Ascending aorta (tissue), 2 donors: ENCODE measurements at regions of chr20 and their contacts with region 1.

Region 1: DNA sequence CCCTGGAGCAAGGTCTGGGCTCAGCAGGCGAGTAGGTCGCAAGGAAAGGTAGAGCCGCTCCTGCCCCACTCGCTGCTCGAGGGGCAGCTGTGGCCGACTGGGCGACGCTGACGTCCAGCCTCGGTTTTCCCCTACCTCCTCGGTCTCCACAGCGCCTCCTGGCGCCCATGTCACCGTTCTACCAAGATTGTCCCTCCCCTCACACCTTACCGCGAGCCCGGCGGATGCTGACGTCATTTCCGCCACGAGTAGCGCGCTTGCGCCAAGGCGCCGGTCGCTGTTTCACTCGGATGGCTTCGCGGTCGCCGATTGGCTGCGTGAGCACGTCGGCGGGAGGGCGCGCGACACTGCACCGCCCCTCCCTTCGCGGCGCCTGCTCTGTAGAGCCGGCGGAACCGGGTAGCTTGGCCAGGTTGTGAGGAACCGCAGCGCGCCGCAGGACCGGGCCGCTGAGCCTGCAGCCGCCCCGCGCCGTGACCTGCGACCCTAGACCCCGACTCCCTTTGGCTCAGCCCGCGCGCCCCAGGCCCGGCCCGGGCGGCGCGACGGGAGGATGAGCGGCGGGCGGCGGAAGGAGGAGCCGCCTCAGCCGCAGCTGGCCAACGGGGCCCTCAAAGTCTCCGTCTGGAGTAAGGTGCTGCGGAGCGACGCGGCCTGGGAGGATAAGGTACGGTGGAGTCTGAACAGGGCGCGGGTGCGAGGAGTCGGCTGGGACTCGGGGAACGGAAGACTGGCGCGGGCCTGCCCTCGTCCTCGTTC is at the start of gene RAB5IF:
- DNase-seq: peak; percentile 94 to 99
- H3K4me3 ChIP-seq: peak within 1 kb of the TSS; percentile 80 to 100
- H3K27ac ChIP-seq: peak within 1 kb of the TSS; percentile 83 to 92
- H3K4me1 ChIP-seq: peaks cover 5 to 21% of the 10 kb centered on the region in 2 donors
- H3K27me3 ChIP-seq: no peaks in the 10 kb centered on the region
- CTCF ChIP-seq: peak; percentile 85 to 97 (median 88)
- total RNA-seq, gene RAB5IF: 28.4 TPM

Region 2: GRCh38 chr20:36235892-36236785 is 369.4 kb before region 1 on chr20 and contains the start of gene AAR2:
- intact Hi-C with region 1: loop called (anchors 1 kb)
- DNase-seq: peak; percentile 13 to 83
- H3K4me3 ChIP-seq: peak within 1 kb of the TSS; percentile 90 to 94
- H3K27ac ChIP-seq: peak within 1 kb of the TSS; percentile 82 to 84
- H3K4me1 ChIP-seq: peaks cover 5 to 17% of the 10 kb centered on the region in 2 donors
- H3K27me3 ChIP-seq: no peaks in the 10 kb centered on the region
- CTCF ChIP-seq: no peak
- total RNA-seq, gene AAR2: 51.4 TPM

Region 3: GRCh38 chr20:36460648-36461599 is 144.7 kb before region 1 on chr20:
- intact Hi-C with region 1: loop called (anchors 2 kb)
- DNase-seq: peak; percentile 67 to 97
- H3K4me3 ChIP-seq: peak overlapping the region; percentile 80 to 99
- H3K27ac ChIP-seq: peak overlapping the region; percentile 99
- H3K4me1 ChIP-seq: peaks cover 21 to 33% of the 10 kb centered on the region in 2 donors
- H3K27me3 ChIP-seq: no peaks in the 10 kb centered on the region
- CTCF ChIP-seq: no peak

Region 4: GRCh38 chr20:36550797-36551299 is 54.7 kb before region 1 on chr20:
- intact Hi-C with region 1: loop called (anchors 1 kb)
- DNase-seq: no peak
- H3K4me3 ChIP-seq: no peak overlapping the region
- H3K27ac ChIP-seq: peak overlapping the region; percentile 72 to 75
- H3K4me1 ChIP-seq: peaks cover 5 to 30% of the 10 kb centered on the region in 2 donors
- H3K27me3 ChIP-seq: no peaks in the 10 kb centered on the region
- CTCF ChIP-seq: no peak

Region 5: GRCh38 chr20:36573103-36573794 is 32.3 kb before region 1 on chr20 and contains the start of gene TGIF2:
- intact Hi-C with region 1: loop called (anchors 1 kb)
- DNase-seq: peak; percentile 49 to 93
- H3K4me3 ChIP-seq: peak within 1 kb of the TSS; percentile 63 to 79
- H3K27ac ChIP-seq: peak within 1 kb of the TSS; percentile 83 to 90
- H3K4me1 ChIP-seq: peaks cover 0 to 20% of the 10 kb centered on the region in 2 donors
- H3K27me3 ChIP-seq: no peaks in the 10 kb centered on the region
- CTCF ChIP-seq: no peak
- total RNA-seq, gene TGIF2: 29.8 TPM

Region 6: GRCh38 chr20:36745927-36746659 is 140.5 kb after region 1 on chr20 and contains the start of gene NDRG3:
- intact Hi-C with region 1: loop called (anchors 5 kb)
- DNase-seq: peak; percentile 84 to 97
- H3K4me3 ChIP-seq: peak within 1 kb of the TSS; percentile 97 to 100
- H3K27ac ChIP-seq: peak within 1 kb of the TSS; percentile 84 to 89
- H3K4me1 ChIP-seq: peaks cover 3 to 14% of the 10 kb centered on the region in 2 donors
- H3K27me3 ChIP-seq: no peaks in the 10 kb centered on the region
- CTCF ChIP-seq: peak in 2 of 3 experiments; percentile 3 to 29
- total RNA-seq, gene NDRG3: 36.9 TPM